ENCODE measurements at regions of chr2 and their contacts with region 1.

Region 1: GRCh38 chr2:201275990-201276389 is 15.7 kb downstream of the CASP8 start:
- DNase-seq: no peak
- ATAC-seq: no peak
- H3K4me3 Mint-ChIP-seq: no peak overlapping the region
- H3K27ac Mint-ChIP-seq: no peak overlapping the region
- H3K4me1 Mint-ChIP-seq: peaks cover 54% of the 10 kb centered on the region
- H3K27me3 Mint-ChIP-seq: no peaks in the 10 kb centered on the region

Region 2: GRCh38 chr2:201263779-201264178 is 12.2 kb before region 1 on chr2:
- CTCF ChIA-PET with region 1: interaction called, 32 read pairs
- POLR2A ChIA-PET with region 1: interaction called, 8 read pairs
- intact Hi-C with region 1: loop called in 1 of 2 experiments (anchors 1 kb)
- DNase-seq: peak; percentile 47
- ATAC-seq: no peak
- H3K4me3 Mint-ChIP-seq: peak overlapping the region; percentile 66
- H3K27ac Mint-ChIP-seq: peak overlapping the region; percentile 78
- H3K4me1 Mint-ChIP-seq: peaks cover 75% of the 10 kb centered on the region
- H3K27me3 Mint-ChIP-seq: no peaks in the 10 kb centered on the region

Region 3: DNA sequence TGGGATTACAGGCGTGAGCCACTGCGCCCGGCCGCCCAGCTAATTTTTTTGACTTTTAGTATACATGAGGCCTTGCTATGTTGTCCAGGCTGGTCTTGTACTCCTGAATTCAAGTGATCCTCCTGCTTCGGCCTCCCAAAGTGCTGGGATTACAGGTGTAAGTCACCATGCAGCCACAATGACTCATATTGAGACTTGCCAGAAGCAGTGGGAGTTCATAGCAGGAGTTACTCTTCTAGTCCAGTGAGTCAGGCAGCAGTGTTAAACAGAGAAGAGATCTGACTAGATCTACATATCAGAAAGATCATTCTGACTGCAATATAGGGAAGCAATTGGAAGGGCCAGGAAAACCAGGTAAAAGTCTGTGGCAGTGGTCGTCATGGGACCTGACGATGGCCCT is 82.7 kb after region 1 on chr2:
- CTCF ChIA-PET with region 1: interaction called, 3 read pairs
- POLR2A ChIA-PET with region 1: no interaction called
- intact Hi-C with region 1: loop called in 1 of 2 experiments (anchors 1 kb)
- DNase-seq: peak; percentile 73
- ATAC-seq: peak; percentile 92
- H3K4me3 Mint-ChIP-seq: no peak overlapping the region
- H3K27ac Mint-ChIP-seq: peak overlapping the region; percentile 15
- H3K4me1 Mint-ChIP-seq: peaks cover 36% of the 10 kb centered on the region
- H3K27me3 Mint-ChIP-seq: no peaks in the 10 kb centered on the region